Activated B cell treated with CpG ODN at 0.5 μM for 24 hours (primary cell): ENCODE measurements at regions of chr10 and their contacts with region 1.

Region 1: GRCh38 chr10:73495884-73496674 is at the start of gene PPP3CB:
- DNase-seq: no peak
- ATAC-seq: peak; percentile 73
- H3K4me3 Mint-ChIP-seq: peak within 1 kb of the TSS; percentile 92
- H3K27ac Mint-ChIP-seq: peak within 1 kb of the TSS; percentile 96
- H3K4me1 Mint-ChIP-seq: peaks cover 52% of the 10 kb centered on the region
- H3K27me3 Mint-ChIP-seq: no peaks in the 10 kb centered on the region
- CTCF ChIP-seq: no peak
- total RNA-seq, gene PPP3CB: 41.4 and 43.3 TPM in 2 replicates

Region 2: GRCh38 chr10:73167783-73168464 is 328.2 kb before region 1 on chr10 and contains the starts of genes ECD and FAM149B1:
- CTCF ChIA-PET with region 1: no interaction called
- POLR2A ChIA-PET with region 1: no interaction called
- intact Hi-C with region 1: loop called (anchors 5 kb)
- DNase-seq: peak; percentile 95
- ATAC-seq: peak; percentile 98
- H3K4me3 Mint-ChIP-seq: peak within 1 kb of the TSS; percentile 100
- H3K27ac Mint-ChIP-seq: peak within 1 kb of the TSS; percentile 99
- H3K4me1 Mint-ChIP-seq: peaks cover 34% of the 10 kb centered on the region
- H3K27me3 Mint-ChIP-seq: no peaks in the 10 kb centered on the region
- CTCF ChIP-seq: no peak
- total RNA-seq, gene ECD: 31.8 and 35.0 TPM in 2 replicates
- total RNA-seq, gene FAM149B1: 11.4 and 16.0 TPM in 2 replicates

Region 3: DNA sequence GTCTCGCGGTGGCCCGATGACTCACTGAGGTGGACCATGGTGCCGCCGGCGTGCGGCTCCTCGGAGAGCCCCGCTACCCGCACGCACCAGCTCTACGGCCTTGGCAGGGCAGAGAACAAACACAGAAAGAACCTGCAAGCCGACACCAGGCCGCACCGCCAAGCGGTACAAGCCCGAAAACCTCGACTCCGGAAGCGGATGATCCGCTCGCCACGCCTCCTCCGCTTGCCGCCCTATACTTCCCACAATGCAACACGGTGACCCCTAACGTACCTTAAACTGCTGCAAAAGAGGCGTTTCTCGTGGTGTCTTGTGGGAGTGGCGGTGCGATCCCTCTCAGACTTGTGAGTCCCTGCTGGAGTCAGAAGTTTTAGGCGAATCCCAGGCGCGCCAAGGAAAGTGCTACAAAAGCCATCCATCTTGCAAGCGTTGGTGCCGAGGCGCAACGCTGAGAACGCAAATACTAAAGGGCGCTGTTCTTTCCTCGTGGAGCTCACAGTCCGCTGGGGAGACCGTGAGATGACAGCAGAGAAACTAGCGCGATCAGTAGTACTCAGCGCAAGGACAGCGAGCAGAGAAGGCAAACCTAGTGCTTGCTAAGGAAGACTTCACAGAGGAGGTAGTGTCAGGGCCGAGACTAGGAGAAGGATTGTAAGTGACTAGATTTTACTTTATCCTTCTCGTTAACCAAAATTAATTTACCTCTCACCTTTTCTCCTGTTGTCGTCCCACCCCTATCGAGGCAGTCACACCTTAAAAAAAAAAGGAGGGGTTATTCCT is 243.4 kb before region 1 on chr10 and contains the start of gene MRPS16:
- CTCF ChIA-PET with region 1: no interaction called
- POLR2A ChIA-PET with region 1: interaction called, 18 read pairs
- intact Hi-C with region 1: loop called (anchors 1 kb)
- DNase-seq: peak; percentile 84
- ATAC-seq: peak; percentile 89
- H3K4me3 Mint-ChIP-seq: peak within 1 kb of the TSS; percentile 99
- H3K27ac Mint-ChIP-seq: peak within 1 kb of the TSS; percentile 95
- H3K4me1 Mint-ChIP-seq: peaks cover 44% of the 10 kb centered on the region
- H3K27me3 Mint-ChIP-seq: no peaks in the 10 kb centered on the region
- CTCF ChIP-seq: no peak
- total RNA-seq, gene MRPS16: 85.9 and 88.5 TPM in 2 replicates

Region 4: GRCh38 chr10:73413528-73414229 is 82.4 kb before region 1 on chr10 and contains the start of gene ANXA7:
- CTCF ChIA-PET with region 1: no interaction called
- POLR2A ChIA-PET with region 1: interaction called, 39 read pairs
- intact Hi-C with region 1: loop called (anchors 1 kb)
- DNase-seq: peak; percentile 86
- ATAC-seq: peak; percentile 93
- H3K4me3 Mint-ChIP-seq: peak within 1 kb of the TSS; percentile 92
- H3K27ac Mint-ChIP-seq: peak within 1 kb of the TSS; percentile 86
- H3K4me1 Mint-ChIP-seq: peaks cover 56% of the 10 kb centered on the region
- H3K27me3 Mint-ChIP-seq: no peaks in the 10 kb centered on the region
- CTCF ChIP-seq: no peak
- total RNA-seq, gene ANXA7: 150 TPM in 2 replicates

Region 5: DNA sequence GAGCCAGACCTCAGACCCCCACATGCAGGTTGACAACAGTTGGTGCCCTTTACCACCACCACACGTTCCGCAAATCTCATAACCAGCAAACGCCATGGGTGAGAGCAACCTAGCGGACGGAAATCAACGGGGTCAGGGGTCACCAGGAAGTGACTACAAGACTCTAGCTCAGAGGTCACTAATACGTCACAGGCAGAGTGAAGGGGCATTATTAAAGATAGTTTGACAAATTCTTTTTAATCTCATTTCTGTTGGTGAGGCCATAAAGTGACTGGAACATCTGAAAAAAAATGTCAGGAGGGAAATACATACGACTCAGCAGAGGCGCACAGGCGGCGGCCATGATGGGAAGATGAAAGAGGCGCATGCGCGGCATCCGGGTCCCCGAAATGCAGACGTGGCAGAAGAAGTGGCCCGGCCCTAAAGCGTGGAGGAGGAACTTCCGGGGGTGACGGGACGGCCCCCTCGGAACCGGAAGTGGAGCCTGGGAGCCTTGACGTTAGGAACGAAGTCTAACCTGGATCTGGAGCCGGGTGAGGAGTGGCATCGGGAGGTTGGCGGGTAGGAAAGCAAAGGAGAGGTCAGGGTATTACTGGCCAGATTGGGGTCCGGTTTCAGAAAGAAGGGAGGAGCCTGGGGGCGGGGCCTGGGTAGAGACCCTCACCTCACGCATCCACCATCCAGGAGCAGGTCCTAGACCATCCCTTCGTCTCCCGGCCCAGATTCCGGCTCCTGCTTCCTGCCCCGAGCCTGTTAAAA is 248.0 kb after region 1 on chr10 and contains the start of gene SEC24C:
- CTCF ChIA-PET with region 1: no interaction called
- POLR2A ChIA-PET with region 1: interaction called, 20 read pairs
- intact Hi-C with region 1: loop called (anchors 1 kb)
- DNase-seq: peak; percentile 86
- ATAC-seq: peak; percentile 95
- H3K4me3 Mint-ChIP-seq: peak within 1 kb of the TSS; percentile 100
- H3K27ac Mint-ChIP-seq: peak within 1 kb of the TSS; percentile 100
- H3K4me1 Mint-ChIP-seq: peaks cover 41% of the 10 kb centered on the region
- H3K27me3 Mint-ChIP-seq: no peaks in the 10 kb centered on the region
- CTCF ChIP-seq: no peak
- total RNA-seq, gene SEC24C: 78.5 and 89.8 TPM in 2 replicates

Region 6: DNA sequence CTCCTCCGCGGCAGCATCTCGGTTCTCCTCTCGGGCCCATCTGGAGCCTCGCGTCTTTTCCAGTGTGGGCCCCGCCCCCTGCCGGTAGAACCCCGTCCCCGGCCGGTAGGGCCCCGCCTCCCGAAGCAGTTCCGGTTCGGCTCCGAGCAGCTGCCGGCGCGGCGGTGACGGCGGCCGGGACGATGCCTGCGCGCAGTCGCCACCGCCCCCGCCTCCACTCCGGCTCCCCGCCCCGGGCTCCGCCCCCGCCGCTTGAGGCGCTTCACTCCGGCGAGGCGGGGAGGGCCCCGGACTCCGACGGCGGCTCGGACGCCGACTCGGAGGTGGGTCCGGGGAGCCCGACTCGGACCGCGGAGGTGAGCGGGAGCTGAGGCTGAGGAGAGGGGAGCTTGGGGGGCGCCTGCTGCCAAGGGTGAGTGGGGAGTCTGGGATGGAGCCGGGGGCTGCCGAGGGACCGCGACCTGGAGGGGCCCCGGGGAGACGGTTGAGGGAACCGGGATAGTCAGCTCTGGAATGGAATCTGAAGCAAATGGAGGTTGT is 1615.4 kb after region 1 on chr10 and contains the start of gene SAMD8:
- CTCF ChIA-PET with region 1: no interaction called
- POLR2A ChIA-PET with region 1: interaction called, 3 read pairs
- intact Hi-C with region 1: loop called (anchors 5 kb)
- DNase-seq: peak; percentile 95
- ATAC-seq: peak; percentile 81
- H3K4me3 Mint-ChIP-seq: peak within 1 kb of the TSS; percentile 90
- H3K27ac Mint-ChIP-seq: peak within 1 kb of the TSS; percentile 90
- H3K4me1 Mint-ChIP-seq: peaks cover 45% of the 10 kb centered on the region
- H3K27me3 Mint-ChIP-seq: no peaks in the 10 kb centered on the region
- CTCF ChIP-seq: no peak
- total RNA-seq, gene SAMD8: 25.8 and 29.1 TPM in 2 replicates